ENCODE measurements at regions of chr12 and their contacts with region 1.

Region 1: GRCh38 chr12:4857472-4858291 is 52.0 kb upstream of the KCNA1 start:
- DNase-seq: peak; percentile 75

Region 2: DNA sequence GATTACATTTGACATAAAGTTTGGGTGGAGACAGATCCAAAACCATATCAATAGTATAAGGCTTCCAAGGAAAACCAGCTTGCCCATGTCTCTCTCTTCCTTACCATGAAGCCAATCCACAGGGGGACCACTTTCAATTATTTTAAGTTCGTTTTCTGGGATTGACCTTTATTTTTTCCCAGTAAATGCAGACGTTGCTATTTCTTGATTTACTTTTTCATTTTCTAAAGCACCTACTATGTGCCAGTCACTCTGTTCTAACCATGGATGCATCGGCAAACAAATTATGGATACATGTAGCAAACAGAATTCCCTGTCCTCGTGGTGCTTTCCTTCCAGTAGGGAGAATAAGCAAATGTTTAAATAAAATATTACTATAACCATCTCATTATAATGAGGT is 13.8 kb before region 1 on chr12:
- CTCF ChIA-PET with region 1: interaction called, 10 read pairs
- POLR2A ChIA-PET with region 1: no interaction called
- DNase-seq: no peak

Region 3: GRCh38 chr12:4908684-4909409 is 51.2 kb after region 1 on chr12:
- CTCF ChIA-PET with region 1: interaction called, 11 read pairs
- POLR2A ChIA-PET with region 1: no interaction called
- DNase-seq: peak; percentile 72

Region 4: DNA sequence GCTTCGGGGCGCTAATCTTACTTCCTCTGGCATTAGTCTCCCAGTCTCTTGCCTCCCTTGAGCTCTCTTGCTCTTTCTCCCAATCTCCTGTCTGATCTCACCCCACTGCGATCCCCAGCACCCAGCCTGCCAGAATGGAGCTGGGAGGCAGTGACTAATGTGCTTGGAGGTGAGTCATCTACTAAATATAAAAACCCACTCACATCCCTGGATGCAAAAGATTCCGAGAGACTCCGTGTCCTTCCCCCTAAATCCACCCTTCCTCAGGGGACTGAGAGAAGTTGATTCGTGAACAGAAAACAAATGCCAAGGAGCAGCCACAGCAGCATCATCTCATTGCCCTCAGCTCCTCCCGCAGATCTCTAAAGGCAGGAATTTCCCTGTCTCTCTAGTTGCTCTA is 140.3 kb after region 1 on chr12:
- CTCF ChIA-PET with region 1: interaction called, 102 read pairs
- POLR2A ChIA-PET with region 1: interaction called, 3 read pairs
- DNase-seq: no peak

Region 5: GRCh38 chr12:5003020-5003666 is 145.5 kb after region 1 on chr12:
- CTCF ChIA-PET with region 1: interaction called, 102 read pairs
- POLR2A ChIA-PET with region 1: interaction called, 3 read pairs
- DNase-seq: peak; percentile 76